MCF 10A (cell line): ENCODE measurements at regions of chr6 and their contacts with region 1.

Region 1: DNA sequence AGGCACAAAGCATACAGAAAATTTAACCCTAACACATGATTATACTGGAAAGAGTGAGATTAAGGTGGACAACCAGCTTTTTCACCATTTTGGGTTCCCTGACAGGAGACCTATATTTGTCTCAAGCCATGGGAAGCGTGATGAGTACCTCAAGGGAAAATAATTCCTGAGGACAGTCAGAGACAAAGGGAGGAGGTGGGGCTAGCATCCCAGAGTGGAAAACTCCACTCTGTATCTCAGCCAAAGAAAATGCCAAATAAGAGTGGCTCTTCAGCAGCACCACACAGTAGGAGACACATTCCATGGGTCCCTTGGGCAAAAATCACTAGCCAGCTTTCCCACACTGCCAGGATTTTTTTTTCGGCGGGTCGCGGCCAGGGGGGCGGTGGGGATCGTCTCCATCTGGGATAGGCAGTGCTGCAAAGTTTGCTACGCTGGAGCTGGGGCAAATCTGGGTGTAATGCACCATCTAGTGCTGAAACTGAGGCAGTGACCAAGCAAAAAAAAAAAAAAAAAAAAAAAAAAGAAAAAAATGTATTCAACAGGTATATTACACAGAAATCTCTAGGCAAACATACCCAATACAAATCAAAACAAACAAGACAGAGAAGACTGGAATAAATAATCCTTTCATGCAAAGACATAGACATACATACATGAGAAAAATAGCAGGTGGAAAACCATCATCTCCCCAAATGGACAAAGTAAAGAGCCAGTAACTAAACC is 77.3 kb upstream of the SLC35F1 start:
- DNase-seq: peak; percentile 59
- H3K4me3 Mint-ChIP-seq: peak overlapping the region; percentile 37
- H3K27ac Mint-ChIP-seq: no peak overlapping the region
- H3K4me1 Mint-ChIP-seq: peaks cover 4% of the 10 kb centered on the region
- H3K27me3 Mint-ChIP-seq: peaks cover 90% of the 10 kb centered on the region
- CTCF ChIP-seq: peak; percentile 52

Region 2: DNA sequence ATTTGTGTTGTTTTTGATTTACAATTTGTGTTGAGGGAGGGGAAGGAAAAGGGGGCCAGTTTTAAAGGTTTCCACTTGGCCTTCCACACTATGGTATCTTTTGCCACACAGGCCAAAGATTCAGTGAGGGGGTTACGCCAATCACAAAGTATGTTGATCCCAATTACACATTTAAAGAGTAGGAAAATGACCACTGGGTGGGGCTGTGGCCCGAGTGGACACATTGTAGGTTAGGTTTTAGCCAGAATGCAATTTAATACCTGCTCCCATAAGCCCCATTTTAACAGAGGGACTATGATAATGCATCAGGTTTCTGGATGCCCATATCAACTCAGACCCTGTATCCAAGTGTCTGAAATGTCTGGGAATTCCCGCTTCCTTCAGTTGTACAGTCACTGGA is 548.8 kb before region 1 on chr6:
- CTCF ChIA-PET with region 1: interaction called, 3 read pairs
- POLR2A ChIA-PET with region 1: no interaction called
- intact Hi-C with region 1: loop called (anchors 5 kb)
- DNase-seq: peak; percentile 54
- H3K4me3 Mint-ChIP-seq: no peak overlapping the region
- H3K27ac Mint-ChIP-seq: no peak overlapping the region
- H3K4me1 Mint-ChIP-seq: no peaks in the 10 kb centered on the region
- H3K27me3 Mint-ChIP-seq: peaks cover 13% of the 10 kb centered on the region
- CTCF ChIP-seq: peak; percentile 13

Region 3: DNA sequence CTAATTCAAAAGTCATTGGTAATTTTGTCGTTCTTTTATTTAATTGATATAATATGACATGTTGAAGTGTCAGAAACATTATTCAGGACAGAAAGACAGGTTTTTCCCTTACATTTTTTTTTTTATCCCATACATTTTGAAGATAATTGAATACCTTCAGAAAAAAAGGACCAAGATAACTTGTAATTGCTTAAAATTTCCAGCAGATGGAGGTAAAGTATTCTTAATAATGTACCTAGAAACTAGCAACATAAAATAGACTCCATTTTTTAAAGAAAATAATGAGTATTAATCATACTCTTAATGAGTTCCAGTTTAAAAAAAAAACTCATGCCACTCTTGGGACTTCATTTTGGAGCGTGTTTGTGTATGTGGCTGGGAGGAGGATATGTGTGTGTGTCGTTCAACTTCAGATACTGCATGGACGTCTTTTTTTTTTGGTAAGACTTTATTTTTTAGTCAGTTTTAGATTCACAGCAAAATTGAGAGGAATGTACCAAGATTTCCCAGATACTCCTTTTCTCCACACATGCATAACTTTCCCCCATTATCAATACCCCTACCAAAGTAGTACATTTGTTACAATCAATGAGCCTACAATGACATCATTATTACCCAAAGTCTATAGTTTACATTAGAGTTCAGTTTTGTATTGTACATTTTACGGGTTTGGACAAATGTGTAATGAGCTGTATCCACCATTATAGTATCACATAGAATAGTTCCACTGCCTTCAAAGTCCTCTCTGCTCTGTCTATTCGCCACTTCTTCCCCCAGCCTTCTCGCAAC is 483.4 kb before region 1 on chr6:
- CTCF ChIA-PET with region 1: interaction called, 5 read pairs
- POLR2A ChIA-PET with region 1: no interaction called
- intact Hi-C with region 1: loop called (anchors 2 kb)
- DNase-seq: peak; percentile 16
- H3K4me3 Mint-ChIP-seq: no peak overlapping the region
- H3K27ac Mint-ChIP-seq: no peak overlapping the region
- H3K4me1 Mint-ChIP-seq: peaks cover 6% of the 10 kb centered on the region
- H3K27me3 Mint-ChIP-seq: no peaks in the 10 kb centered on the region
- CTCF ChIP-seq: peak; percentile 38

Region 4: GRCh38 chr6:117817499-117817898 is 12.3 kb before region 1 on chr6:
- CTCF ChIA-PET with region 1: interaction called, 10 read pairs
- POLR2A ChIA-PET with region 1: no interaction called
- intact Hi-C with region 1: no loop called
- DNase-seq: no peak
- H3K4me3 Mint-ChIP-seq: no peak overlapping the region
- H3K27ac Mint-ChIP-seq: no peak overlapping the region
- H3K4me1 Mint-ChIP-seq: no peaks in the 10 kb centered on the region
- H3K27me3 Mint-ChIP-seq: peaks cover 23% of the 10 kb centered on the region
- CTCF ChIP-seq: no peak

Region 5: GRCh38 chr6:118800394-118801071 is 970.8 kb after region 1 on chr6:
- CTCF ChIA-PET with region 1: no interaction called
- POLR2A ChIA-PET with region 1: no interaction called
- intact Hi-C with region 1: no loop called
- DNase-seq: peak; percentile 86
- H3K4me3 Mint-ChIP-seq: no peak overlapping the region
- H3K27ac Mint-ChIP-seq: no peak overlapping the region
- H3K4me1 Mint-ChIP-seq: peaks cover 7% of the 10 kb centered on the region
- H3K27me3 Mint-ChIP-seq: no peaks in the 10 kb centered on the region
- CTCF ChIP-seq: peak; percentile 81